Common myeloid progenitor, CD34-positive (primary cell): ENCODE measurements at regions of chr3 and their contacts with region 1.

Region 1: GRCh38 chr3:119184796-119185570 is 11.6 kb downstream of the UPK1B start:
- DNase-seq: no peak
- H3K4me3 ChIP-seq: no peak overlapping the region
- H3K27ac ChIP-seq: no peak overlapping the region
- H3K4me1 ChIP-seq: no peaks in the 10 kb centered on the region
- H3K27me3 ChIP-seq: peaks cover 0 to 2% (median 0%) of the 10 kb centered on the region in 5 experiments

Region 2: DNA sequence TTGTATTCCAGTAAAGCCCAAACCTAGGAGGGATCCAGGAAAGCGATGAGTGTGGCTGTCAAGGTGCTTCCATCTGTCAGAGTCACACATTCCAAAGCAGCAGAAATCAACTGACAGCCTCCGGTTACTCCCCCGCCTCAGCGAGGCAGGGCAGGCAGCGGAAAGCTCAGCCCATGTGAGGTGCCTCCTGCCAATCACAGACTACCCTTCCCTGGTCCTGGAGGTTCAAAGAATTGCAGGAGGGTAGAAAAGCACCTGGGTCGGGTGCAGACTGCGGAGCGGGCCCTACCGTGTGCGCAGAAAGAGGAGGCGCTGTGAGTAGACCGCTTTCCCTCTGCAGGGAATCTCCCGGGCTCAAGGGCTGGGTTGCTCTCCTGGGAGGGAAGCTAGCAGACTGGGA is 11.7 kb before region 1 on chr3 and contains the start of gene UPK1B:
- CTCF ChIA-PET with region 1: no interaction called
- POLR2A ChIA-PET with region 1: interaction called, 10 read pairs
- DNase-seq: no peak
- H3K4me3 ChIP-seq: no peak within 1 kb of the TSS
- H3K27ac ChIP-seq: no peak within 1 kb of the TSS
- H3K4me1 ChIP-seq: no peaks in the 10 kb centered on the region
- H3K27me3 ChIP-seq: peaks cover 0 to 20% (median 5%) of the 10 kb centered on the region in 5 experiments

Region 3: DNA sequence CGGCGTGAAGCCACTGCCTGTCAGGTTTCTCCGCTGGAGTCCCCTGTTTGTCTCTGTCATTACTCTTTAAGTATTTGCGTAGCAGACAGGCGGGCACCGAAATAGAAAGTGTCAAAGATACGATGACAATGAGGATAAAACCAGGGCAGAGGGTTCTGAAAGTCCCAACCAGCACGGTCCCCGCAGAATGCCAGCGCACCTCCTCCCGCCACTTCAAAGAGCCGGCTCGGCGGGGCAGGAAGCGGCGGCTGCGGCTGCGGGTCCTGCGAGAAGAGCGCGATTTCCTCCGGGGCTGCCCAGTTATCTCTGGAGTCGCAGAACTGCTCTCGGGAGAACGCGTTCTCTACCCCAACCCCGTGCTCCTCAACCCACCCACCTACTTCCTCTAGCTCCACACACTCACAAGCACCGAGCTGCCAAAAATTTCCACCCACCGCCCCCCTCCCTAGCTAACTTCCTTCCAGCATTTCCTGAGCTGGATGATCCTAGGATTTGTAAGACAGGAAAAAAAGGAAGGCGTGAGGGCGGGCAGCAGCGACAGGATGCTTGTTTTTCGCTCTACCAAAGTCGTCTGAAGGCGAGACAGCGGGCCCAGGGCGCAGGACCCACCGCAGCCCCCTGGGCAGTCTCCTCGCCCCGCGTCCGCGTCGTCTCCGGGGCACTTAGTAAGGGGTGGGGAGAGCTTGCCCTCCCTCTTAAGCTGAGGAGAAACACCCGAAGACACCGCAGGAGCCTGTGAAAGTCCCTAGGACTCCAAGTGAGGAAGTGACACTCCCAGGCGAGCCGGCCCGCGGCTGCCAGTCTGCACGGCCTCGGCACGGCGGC is 109.1 kb after region 1 on chr3 and contains the start of gene ARHGAP31:
- CTCF ChIA-PET with region 1: no interaction called
- POLR2A ChIA-PET with region 1: no interaction called
- DNase-seq: peak; percentile 68 to 92 (median 90)
- H3K4me3 ChIP-seq: peak within 1 kb of the TSS; percentile 66 to 93 (median 73)
- H3K27ac ChIP-seq: peak within 1 kb of the TSS in 1 of 2 experiments; percentile 69
- H3K4me1 ChIP-seq: peaks cover 8 to 72% (median 45%) of the 10 kb centered on the region in 4 experiments
- H3K27me3 ChIP-seq: no peaks in the 10 kb centered on the region

Region 4: GRCh38 chr3:119408243-119408950 is 223.4 kb after region 1 on chr3:
- CTCF ChIA-PET with region 1: no interaction called
- POLR2A ChIA-PET with region 1: no interaction called
- DNase-seq: no peak
- H3K4me3 ChIP-seq: no peak overlapping the region
- H3K27ac ChIP-seq: no peak overlapping the region
- H3K4me1 ChIP-seq: no peaks in the 10 kb centered on the region
- H3K27me3 ChIP-seq: no peaks in the 10 kb centered on the region